PC-9 (cell line): ENCODE measurements at regions of chr5 and their contacts with region 1.

Region 1: GRCh38 chr5:91741764-91742505 is 358.8 kb upstream of the ARRDC3 start:
- DNase-seq: no peak
- H3K4me3 ChIP-seq: no peak overlapping the region
- H3K27ac ChIP-seq: no peak overlapping the region
- H3K4me1 ChIP-seq: no peaks in the 10 kb centered on the region
- H3K27me3 ChIP-seq: no peaks in the 10 kb centered on the region
- CTCF ChIP-seq: no peak

Region 2: DNA sequence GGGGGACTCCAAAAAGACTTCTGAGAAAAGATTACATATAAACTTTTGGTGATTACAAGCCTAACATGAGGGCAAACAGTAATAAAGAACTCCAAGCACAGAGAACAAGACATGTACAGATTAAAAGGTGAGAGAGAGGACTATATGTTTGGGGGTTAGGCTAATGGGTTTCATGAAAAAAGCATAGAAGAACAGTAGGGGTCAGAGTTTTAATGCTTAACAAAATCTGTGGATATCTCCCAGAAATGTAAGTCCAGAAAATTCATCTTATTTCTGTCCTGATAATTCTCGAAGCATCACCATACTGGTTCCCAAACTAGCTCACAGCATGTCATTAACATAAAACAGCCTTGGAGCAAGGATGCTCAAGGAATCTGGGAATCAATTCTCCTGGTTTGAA is 496.1 kb before region 1 on chr5:
- CTCF ChIA-PET with region 1: no interaction called
- POLR2A ChIA-PET with region 1: no interaction called
- intact Hi-C with region 1: no loop called
- DNase-seq: no peak
- H3K4me3 ChIP-seq: no peak overlapping the region
- H3K27ac ChIP-seq: no peak overlapping the region
- H3K4me1 ChIP-seq: no peaks in the 10 kb centered on the region
- H3K27me3 ChIP-seq: no peaks in the 10 kb centered on the region
- CTCF ChIP-seq: no peak

Region 3: DNA sequence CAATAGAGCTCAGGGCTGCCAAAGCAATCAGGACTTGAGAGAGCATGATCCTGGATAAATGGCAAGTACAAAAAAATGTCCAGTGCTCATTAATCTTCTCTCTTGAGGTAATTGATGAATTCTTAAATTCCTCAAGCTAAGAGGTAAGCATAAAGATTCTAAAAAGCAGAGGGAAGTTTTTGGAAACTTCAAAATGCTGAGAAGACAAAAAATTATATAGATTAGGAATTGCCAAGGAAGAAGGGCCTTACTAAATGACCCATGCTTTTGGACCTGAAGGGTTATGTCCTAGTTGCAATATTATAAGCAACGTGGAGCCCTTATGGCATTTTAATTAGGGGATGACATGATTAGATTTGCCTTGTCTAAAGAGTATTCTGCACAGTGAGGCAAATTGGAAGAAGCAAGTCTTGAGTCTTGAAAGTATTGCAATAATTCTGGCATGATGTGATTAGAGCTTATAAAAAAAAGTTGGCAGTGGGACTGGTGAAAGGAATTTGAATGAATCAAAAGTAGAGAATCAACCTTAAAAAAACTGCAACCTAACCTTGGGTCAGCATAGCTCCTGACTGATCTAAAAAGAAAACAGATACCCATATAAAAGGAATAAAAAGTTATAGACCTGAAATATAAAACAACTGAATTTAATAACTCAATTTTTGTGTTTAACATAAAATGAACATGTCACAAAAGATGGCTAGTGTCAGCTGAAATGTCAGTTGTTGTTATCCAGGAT is 35.0 kb before region 1 on chr5:
- CTCF ChIA-PET with region 1: no interaction called
- POLR2A ChIA-PET with region 1: no interaction called
- intact Hi-C with region 1: loop called (anchors 1 kb)
- DNase-seq: no peak
- H3K4me3 ChIP-seq: no peak overlapping the region
- H3K27ac ChIP-seq: no peak overlapping the region
- H3K4me1 ChIP-seq: no peaks in the 10 kb centered on the region
- H3K27me3 ChIP-seq: no peaks in the 10 kb centered on the region
- CTCF ChIP-seq: no peak